ENCODE measurements at regions of chr16 and their contacts with region 1.

Region 1: DNA sequence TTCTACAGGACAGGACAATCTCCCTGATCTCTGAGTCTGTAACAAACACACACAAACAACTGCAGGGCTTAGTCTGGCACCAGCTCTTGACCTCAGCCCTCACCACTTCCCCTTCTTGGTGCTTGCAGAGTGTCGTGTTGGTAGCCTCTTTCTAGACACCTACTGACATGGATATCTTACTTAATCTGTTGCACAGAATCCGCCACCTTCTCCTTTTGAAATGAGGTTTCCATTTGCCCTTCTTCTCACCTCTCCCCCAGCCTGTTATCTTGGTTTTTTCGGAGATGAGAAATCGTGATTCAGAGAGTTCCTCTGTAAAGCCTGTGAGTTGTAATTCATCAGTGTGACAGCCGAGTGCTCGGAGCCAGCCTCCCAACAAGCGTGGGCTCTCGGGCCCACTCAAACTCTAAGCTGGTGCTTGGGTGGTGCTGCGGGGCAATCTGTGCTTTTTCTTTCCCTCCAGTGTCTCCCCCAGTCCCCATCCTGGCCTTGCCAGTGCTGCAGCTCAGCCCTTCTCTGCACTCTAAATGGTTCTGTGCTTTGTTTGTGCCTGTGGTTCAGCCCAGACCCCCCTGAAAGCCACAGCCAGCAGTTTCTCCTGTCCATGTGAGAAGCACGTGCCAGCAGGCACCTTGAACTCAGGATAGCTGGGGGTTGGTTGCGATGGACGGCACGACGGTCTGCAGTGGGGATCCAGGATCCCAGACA is 28.1 kb downstream of the KIAA0513 start:
- DNase-seq: no peak
- ATAC-seq: no peak
- H3K4me3 Mint-ChIP-seq: no peak overlapping the region
- H3K27ac Mint-ChIP-seq: peak overlapping the region; percentile 1; the same call in 1 of the 2 replicates
- H3K4me1 Mint-ChIP-seq: peaks cover 17% of the 10 kb centered on the region
- H3K27me3 Mint-ChIP-seq: peaks cover 4% of the 10 kb centered on the region; the same call in 1 of the 2 replicates
- CTCF ChIP-seq: no peak

Region 2: GRCh38 chr16:85027349-85027957 is 28.2 kb before region 1 on chr16 and contains the start of gene KIAA0513:
- CTCF ChIA-PET with region 1: interaction called, 26 read pairs
- POLR2A ChIA-PET with region 1: no interaction called
- DNase-seq: peak; percentile 91
- ATAC-seq: peak; percentile 86
- H3K4me3 Mint-ChIP-seq: peak within 1 kb of the TSS; percentile 78
- H3K27ac Mint-ChIP-seq: no peak within 1 kb of the TSS
- H3K4me1 Mint-ChIP-seq: peaks cover 21% of the 10 kb centered on the region
- H3K27me3 Mint-ChIP-seq: peaks cover 32% of the 10 kb centered on the region
- CTCF ChIP-seq: no peak
- total RNA-seq, gene KIAA0513: 6.4 to 7.8 TPM (median 7.3 TPM) in 3 replicates

Region 3: GRCh38 chr16:85033173-85033572 is 22.5 kb before region 1 on chr16:
- CTCF ChIA-PET with region 1: interaction called, 26 read pairs
- POLR2A ChIA-PET with region 1: no interaction called
- DNase-seq: no peak
- ATAC-seq: peak; percentile 34; the same call in 1 of the 2 replicates
- H3K4me3 Mint-ChIP-seq: no peak overlapping the region
- H3K27ac Mint-ChIP-seq: no peak overlapping the region
- H3K4me1 Mint-ChIP-seq: peaks cover 24% of the 10 kb centered on the region
- H3K27me3 Mint-ChIP-seq: peaks cover 14% of the 10 kb centered on the region
- CTCF ChIP-seq: no peak

Region 4: GRCh38 chr16:85068746-85069145 is 13.1 kb after region 1 on chr16:
- CTCF ChIA-PET with region 1: interaction called, 12 read pairs
- POLR2A ChIA-PET with region 1: interaction called, 3 read pairs
- DNase-seq: no peak
- ATAC-seq: no peak
- H3K4me3 Mint-ChIP-seq: no peak overlapping the region
- H3K27ac Mint-ChIP-seq: no peak overlapping the region
- H3K4me1 Mint-ChIP-seq: 0 out of 2 replicates have a peak, but pooled peaks cover 4% of the 10 kb centered on the region
- H3K27me3 Mint-ChIP-seq: no peaks in the 10 kb centered on the region
- CTCF ChIP-seq: no peak

Region 5: DNA sequence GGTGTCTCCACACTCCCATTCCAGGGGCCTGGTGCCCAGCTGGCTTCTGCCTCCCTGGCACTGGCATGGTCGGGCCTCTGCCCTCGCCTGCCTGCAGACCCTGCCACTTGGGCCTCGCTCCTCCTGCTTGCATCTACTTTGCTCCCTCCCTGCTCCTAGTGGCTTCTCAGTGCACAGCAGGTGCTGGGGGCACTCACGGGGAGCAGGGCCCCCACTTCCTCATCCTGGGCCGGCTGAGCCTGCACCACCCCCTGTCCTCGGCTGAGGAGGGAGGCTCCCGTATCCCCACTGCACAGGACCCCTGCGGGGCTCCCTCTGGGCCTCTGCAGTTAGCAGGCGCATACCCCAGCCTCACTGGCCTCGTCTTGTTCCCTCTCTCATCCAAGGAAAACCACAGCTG is 21.4 kb after region 1 on chr16:
- CTCF ChIA-PET with region 1: interaction called, 35 read pairs
- POLR2A ChIA-PET with region 1: no interaction called
- DNase-seq: peak; percentile 29
- ATAC-seq: no peak
- H3K4me3 Mint-ChIP-seq: no peak overlapping the region
- H3K27ac Mint-ChIP-seq: no peak overlapping the region
- H3K4me1 Mint-ChIP-seq: peaks cover 29% of the 10 kb centered on the region
- H3K27me3 Mint-ChIP-seq: peaks cover 50% of the 10 kb centered on the region
- CTCF ChIP-seq: no peak